Activated T-helper 2 cell treated with anti-CD3 and anti-CD28 coated beads, Interferon-gamma antibody, Interleukin-2, Interleukin-4, amounts not matched to agents 10 μg/mL and 5 μg/mL and 100 μg/mL, durations not matched to agents 14 hours and 24 hours and 36 hours (primary cell): ENCODE measurements at regions of chr1 and their contacts with region 1.

Region 1: GRCh38 chr1:152182431-152182830 is 23.4 kb upstream of the RPTN start:
- DNase-seq: no peak
- H3K4me3 Mint-ChIP-seq: no peak overlapping the region
- H3K27ac Mint-ChIP-seq: no peak overlapping the region
- H3K4me1 Mint-ChIP-seq: no peaks in the 10 kb centered on the region
- H3K27me3 Mint-ChIP-seq: peaks cover 32% of the 10 kb centered on the region

Region 2: GRCh38 chr1:152141974-152142584 is 40.4 kb before region 1 on chr1:
- intact Hi-C with region 1: loop called (anchors 2 kb)
- DNase-seq: no peak
- H3K4me3 Mint-ChIP-seq: no peak overlapping the region
- H3K27ac Mint-ChIP-seq: no peak overlapping the region
- H3K4me1 Mint-ChIP-seq: peaks cover 5% of the 10 kb centered on the region
- H3K27me3 Mint-ChIP-seq: peaks cover 37% of the 10 kb centered on the region